CD4-positive, alpha-beta T cell (primary cell): ENCODE measurements at regions of chr2 and their contacts with region 1.

Region 1: DNA sequence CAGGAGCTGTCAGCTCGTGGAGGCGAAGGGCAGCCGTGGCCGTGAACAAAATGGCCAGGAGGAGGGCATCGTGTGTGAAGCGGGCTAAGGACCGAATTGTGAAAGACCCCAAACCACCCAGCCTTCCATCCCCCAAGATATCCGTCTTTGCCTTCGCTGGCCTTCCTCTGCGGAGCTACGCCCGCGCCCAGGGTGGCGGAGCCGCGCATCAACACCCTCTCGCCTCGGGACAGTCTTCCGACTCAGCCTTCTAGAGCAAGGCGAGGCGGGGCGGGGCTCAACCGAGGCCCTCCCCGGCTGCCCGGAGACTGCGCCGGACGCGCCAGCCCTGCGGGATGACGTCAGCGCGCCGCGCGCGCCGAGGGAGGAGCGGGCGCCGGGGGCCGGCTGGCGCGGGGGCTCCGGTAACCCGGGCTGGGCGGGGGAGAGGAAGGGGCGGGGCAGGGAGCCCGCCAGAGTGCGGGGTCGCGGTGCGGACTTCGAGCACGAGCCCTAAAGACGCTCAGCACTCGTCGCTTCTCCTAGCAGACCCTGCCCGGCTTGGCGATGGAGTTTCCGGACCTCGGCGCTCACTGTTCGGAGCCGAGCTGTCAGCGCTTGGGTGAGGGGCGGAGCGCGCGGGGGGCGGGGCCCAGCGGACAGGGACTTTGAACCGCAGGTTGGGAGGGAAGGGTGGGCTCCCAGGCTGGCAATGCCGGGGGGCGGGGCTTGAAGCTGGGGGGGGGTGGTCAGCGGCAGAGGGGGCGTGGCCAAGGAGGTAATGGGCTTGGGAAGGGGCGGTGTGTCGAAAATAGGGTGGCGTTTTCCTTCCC is at the start of gene ZFAND2B:
- DNase-seq: peak; percentile 88 to 98 (median 95)
- ATAC-seq: peak; percentile 93
- H3K4me3 ChIP-seq: peak within 1 kb of the TSS; percentile 69
- H3K4me3 Mint-ChIP-seq: peak within 1 kb of the TSS; percentile 90
- H3K27ac ChIP-seq: peak within 1 kb of the TSS; percentile 89 to 90
- H3K27ac Mint-ChIP-seq: peak within 1 kb of the TSS; percentile 93
- H3K4me1 ChIP-seq: peaks cover 53% of the 10 kb centered on the region
- H3K4me1 Mint-ChIP-seq: peaks cover 47% of the 10 kb centered on the region
- H3K27me3 ChIP-seq: no peaks in the 10 kb centered on the region
- H3K27me3 Mint-ChIP-seq: no peaks in the 10 kb centered on the region
- CTCF ChIP-seq: no peak
- total RNA-seq, gene ZFAND2B: 65.9 to 67.4 TPM

Region 2: DNA sequence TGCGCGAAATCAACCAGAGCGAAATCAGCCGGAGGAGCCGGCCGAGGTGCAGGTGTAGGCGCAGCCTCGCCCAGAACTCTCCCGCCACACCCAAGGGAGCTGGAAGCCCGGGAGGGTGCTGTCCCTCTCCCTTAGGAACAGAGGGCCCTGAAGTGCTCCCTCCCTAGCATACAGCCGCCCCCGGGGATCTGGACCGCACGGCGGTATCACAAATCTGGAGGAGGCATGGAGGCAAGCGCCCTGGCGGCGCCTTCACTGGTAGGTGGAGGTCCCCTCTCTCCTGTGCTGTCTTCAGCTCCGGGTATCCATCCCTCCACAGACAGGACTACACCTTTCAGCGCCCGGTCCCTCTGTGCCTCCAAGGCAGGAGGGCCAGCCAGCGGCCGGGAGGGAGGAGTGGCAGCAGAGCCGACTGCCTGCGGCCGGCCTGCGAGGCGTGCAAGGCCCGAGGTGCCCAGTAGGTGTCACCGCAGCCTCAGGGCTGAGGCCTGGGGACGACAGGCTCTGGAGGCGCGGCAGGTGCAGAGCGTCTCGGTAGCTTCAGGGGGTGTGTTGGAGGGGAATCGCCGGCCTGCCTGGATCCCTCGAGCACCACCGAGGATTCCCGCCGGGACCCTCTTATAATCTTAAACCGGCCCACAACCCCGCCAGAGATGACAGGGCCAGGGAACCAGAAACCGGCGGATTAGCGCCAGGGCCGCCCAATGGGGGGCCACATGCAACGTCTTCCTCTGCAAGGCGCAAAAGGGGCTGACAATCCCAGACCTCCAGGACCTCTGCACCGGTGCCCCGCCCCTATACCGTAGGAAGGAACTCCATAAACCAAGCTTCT is 148.7 kb before region 1 on chr2:
- CTCF ChIA-PET with region 1: interaction called, 9 read pairs
- POLR2A ChIA-PET with region 1: no interaction called
- intact Hi-C with region 1: loop called in 1 of 2 experiments (anchors 5 kb)
- DNase-seq: peak; percentile 54 to 87 (median 72)
- ATAC-seq: peak; percentile 98
- H3K4me3 ChIP-seq: peak overlapping the region; percentile 2
- H3K4me3 Mint-ChIP-seq: peak overlapping the region; percentile 76
- H3K27ac ChIP-seq: no peak overlapping the region
- H3K27ac Mint-ChIP-seq: no peak overlapping the region
- H3K4me1 ChIP-seq: peaks cover 38% of the 10 kb centered on the region
- H3K4me1 Mint-ChIP-seq: peaks cover 20% of the 10 kb centered on the region
- H3K27me3 ChIP-seq: peaks cover 57 to 79% of the 10 kb centered on the region in 2 experiments
- H3K27me3 Mint-ChIP-seq: peaks cover 79% of the 10 kb centered on the region
- CTCF ChIP-seq: peak; percentile 97

Region 3: GRCh38 chr2:219160186-219161017 is 46.2 kb before region 1 on chr2 and contains the start of gene NHEJ1:
- CTCF ChIA-PET with region 1: interaction called, 32 read pairs
- POLR2A ChIA-PET with region 1: interaction called, 16 read pairs
- intact Hi-C with region 1: loop called (anchors 1 kb)
- DNase-seq: peak; percentile 82 to 97 (median 90)
- ATAC-seq: peak; percentile 90
- H3K4me3 ChIP-seq: peak within 1 kb of the TSS; percentile 78
- H3K4me3 Mint-ChIP-seq: peak within 1 kb of the TSS; percentile 94
- H3K27ac ChIP-seq: peak within 1 kb of the TSS; percentile 52 to 77
- H3K27ac Mint-ChIP-seq: peak within 1 kb of the TSS; percentile 94
- H3K4me1 ChIP-seq: peaks cover 17% of the 10 kb centered on the region
- H3K4me1 Mint-ChIP-seq: peaks cover 24% of the 10 kb centered on the region
- H3K27me3 ChIP-seq: no peaks in the 10 kb centered on the region
- H3K27me3 Mint-ChIP-seq: no peaks in the 10 kb centered on the region
- CTCF ChIP-seq: peak; percentile 97
- total RNA-seq, gene NHEJ1: 7.2 to 8.5 TPM

Region 4: GRCh38 chr2:219218732-219219701 is 12.4 kb after region 1 on chr2 and contains the start of gene ABCB6:
- CTCF ChIA-PET with region 1: no interaction called
- POLR2A ChIA-PET with region 1: interaction called, 19 read pairs
- intact Hi-C with region 1: no loop called
- DNase-seq: peak; percentile 67 to 93 (median 86)
- ATAC-seq: peak; percentile 92
- H3K4me3 ChIP-seq: peak within 1 kb of the TSS; percentile 70
- H3K4me3 Mint-ChIP-seq: peak within 1 kb of the TSS; percentile 85
- H3K27ac ChIP-seq: peak within 1 kb of the TSS in 1 of 2 donors; percentile 56
- H3K27ac Mint-ChIP-seq: peak within 1 kb of the TSS; percentile 78
- H3K4me1 ChIP-seq: peaks cover 26% of the 10 kb centered on the region
- H3K4me1 Mint-ChIP-seq: peaks cover 21% of the 10 kb centered on the region
- H3K27me3 ChIP-seq: no peaks in the 10 kb centered on the region
- H3K27me3 Mint-ChIP-seq: no peaks in the 10 kb centered on the region
- CTCF ChIP-seq: no peak
- total RNA-seq, gene ABCB6: 2.6 to 3.1 TPM

Region 5: DNA sequence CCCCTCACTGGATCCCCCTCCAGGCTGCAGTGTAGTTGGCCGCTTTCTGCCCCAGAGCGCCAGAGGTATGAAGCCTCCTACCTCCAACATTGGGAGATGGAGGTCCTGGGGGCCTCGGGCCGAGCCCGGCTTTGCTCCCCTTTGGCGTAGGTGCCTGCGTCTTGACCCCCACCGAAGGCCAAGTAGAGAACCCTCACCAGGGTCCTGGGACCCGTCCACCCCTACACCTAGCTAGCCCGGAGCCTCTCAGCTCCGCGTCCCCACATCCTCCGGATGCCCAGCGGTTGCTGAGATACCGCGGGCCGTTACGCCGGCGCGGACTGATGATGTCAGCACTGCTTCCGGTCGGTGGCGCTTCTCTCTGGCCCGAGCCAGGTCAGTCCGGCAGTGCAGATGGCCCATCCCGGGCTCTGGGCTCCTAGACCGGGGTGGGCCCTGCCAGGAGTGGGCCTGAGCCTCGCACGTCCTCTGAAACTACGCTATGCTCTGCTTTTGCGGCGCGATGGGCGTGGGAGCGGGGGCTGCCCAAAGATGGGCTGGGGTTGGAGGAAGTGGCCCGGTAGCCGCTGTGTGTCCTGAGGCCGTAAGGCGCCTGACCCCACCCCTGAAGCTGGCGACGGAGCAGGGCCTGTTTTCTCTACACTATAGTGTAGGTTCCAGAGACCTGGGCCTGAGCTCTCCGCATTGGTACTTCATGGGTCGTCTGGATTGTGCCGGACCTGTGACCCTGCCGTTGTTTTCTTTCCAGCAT is 38.7 kb after region 1 on chr2 and contains the starts of genes GLB1L and STK16:
- CTCF ChIA-PET with region 1: interaction called, 10 read pairs
- POLR2A ChIA-PET with region 1: interaction called, 26 read pairs
- intact Hi-C with region 1: no loop called
- DNase-seq: peak; percentile 73 to 93 (median 84)
- ATAC-seq: peak; percentile 44
- H3K4me3 ChIP-seq: peak within 1 kb of the TSS; percentile 99
- H3K4me3 Mint-ChIP-seq: peak within 1 kb of the TSS; percentile 88
- H3K27ac ChIP-seq: peak within 1 kb of the TSS; percentile 95 to 98
- H3K27ac Mint-ChIP-seq: peak within 1 kb of the TSS; percentile 96
- H3K4me1 ChIP-seq: peaks cover 62% of the 10 kb centered on the region
- H3K4me1 Mint-ChIP-seq: peaks cover 74% of the 10 kb centered on the region
- H3K27me3 ChIP-seq: no peaks in the 10 kb centered on the region
- H3K27me3 Mint-ChIP-seq: no peaks in the 10 kb centered on the region
- CTCF ChIP-seq: no peak
- total RNA-seq, gene GLB1L: 2.4 to 3.0 TPM
- total RNA-seq, gene STK16: 11.2 to 14.1 TPM

Region 6: GRCh38 chr2:219278655-219279516 is 72.2 kb after region 1 on chr2 and contains the start of gene DNAJB2:
- CTCF ChIA-PET with region 1: interaction called, 3 read pairs
- POLR2A ChIA-PET with region 1: interaction called, 12 read pairs
- intact Hi-C with region 1: loop called in 1 of 2 experiments (anchors 1 kb)
- DNase-seq: peak; percentile 96 to 100 (median 98)
- ATAC-seq: peak; percentile 76
- H3K4me3 ChIP-seq: peak within 1 kb of the TSS; percentile 66
- H3K4me3 Mint-ChIP-seq: peak within 1 kb of the TSS; percentile 97
- H3K27ac ChIP-seq: peak within 1 kb of the TSS; percentile 95 to 97
- H3K27ac Mint-ChIP-seq: peak within 1 kb of the TSS; percentile 98
- H3K4me1 ChIP-seq: peaks cover 43% of the 10 kb centered on the region
- H3K4me1 Mint-ChIP-seq: peaks cover 43% of the 10 kb centered on the region
- H3K27me3 ChIP-seq: no peaks in the 10 kb centered on the region
- H3K27me3 Mint-ChIP-seq: no peaks in the 10 kb centered on the region
- CTCF ChIP-seq: no peak
- total RNA-seq, gene DNAJB2: 151 to 161 TPM

Region 7: GRCh38 chr2:219543601-219544358 is 337.1 kb after region 1 on chr2 and contains the starts of genes CHPF and TMEM198:
- CTCF ChIA-PET with region 1: no interaction called
- POLR2A ChIA-PET with region 1: no interaction called
- intact Hi-C with region 1: loop called in 1 of 2 experiments (anchors 10 kb)
- DNase-seq: peak; percentile 83 to 97 (median 90)
- ATAC-seq: peak; percentile 69
- H3K4me3 ChIP-seq: peak within 1 kb of the TSS; percentile 72
- H3K4me3 Mint-ChIP-seq: peak within 1 kb of the TSS; percentile 86
- H3K27ac ChIP-seq: peak within 1 kb of the TSS; percentile 54 to 60
- H3K27ac Mint-ChIP-seq: peak within 1 kb of the TSS; percentile 75
- H3K4me1 ChIP-seq: peaks cover 32% of the 10 kb centered on the region
- H3K4me1 Mint-ChIP-seq: peaks cover 22% of the 10 kb centered on the region
- H3K27me3 ChIP-seq: no peaks in the 10 kb centered on the region
- H3K27me3 Mint-ChIP-seq: peaks cover 7% of the 10 kb centered on the region
- CTCF ChIP-seq: no peak
- total RNA-seq, gene CHPF: 6.5 to 7.1 TPM
- total RNA-seq, gene TMEM198: 0.47 to 0.91 TPM